ENCODE measurements at regions of chr11 and their contacts with region 1.

Region 1: DNA sequence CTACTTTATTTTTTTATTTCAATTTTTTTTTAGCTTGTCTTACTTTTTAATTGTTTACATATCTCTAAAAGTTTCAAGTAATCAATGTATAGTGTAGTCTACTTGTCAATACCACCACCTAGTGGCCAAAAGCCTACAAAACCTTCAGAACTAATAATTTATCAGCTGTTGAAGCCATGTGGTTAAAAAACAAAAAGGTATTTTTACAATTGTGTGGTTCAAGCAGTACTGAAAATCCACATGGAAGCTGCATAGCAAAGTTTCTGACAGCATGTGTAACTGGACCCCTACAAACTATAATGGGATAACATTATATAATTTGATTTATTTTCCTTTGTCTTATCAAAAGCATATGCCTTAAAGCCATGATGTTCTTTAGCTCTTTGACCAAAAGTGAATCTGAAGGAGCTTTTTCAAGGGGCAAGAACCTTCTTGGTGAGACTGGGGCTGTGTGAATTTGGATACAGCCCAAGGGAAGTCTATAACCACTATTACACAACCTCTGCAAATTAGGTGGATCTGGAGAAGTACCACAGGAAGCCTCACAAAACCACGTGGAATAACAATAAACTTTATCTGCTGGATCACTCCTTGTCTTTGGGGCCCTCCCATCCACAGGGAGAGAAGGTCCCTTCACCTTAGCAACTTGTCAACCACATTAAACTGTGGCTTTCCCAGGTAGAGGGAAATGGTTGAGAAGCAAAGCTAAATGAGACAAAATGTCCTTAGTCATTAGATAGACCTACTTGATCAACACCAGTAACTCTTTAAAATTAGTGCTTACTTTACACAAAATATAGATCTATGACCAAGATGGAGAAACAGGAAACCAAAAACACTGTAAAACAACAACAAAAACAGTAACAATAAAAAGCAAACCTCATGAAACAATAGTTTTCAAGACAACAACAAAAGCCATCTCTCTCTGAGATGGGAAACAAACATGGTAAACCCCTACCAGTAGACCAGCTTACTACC is 9.9 kb downstream of the NARS2 start:
- DNase-seq: no peak
- H3K4me3 ChIP-seq: no peak overlapping the region
- CTCF ChIP-seq: peak; percentile 34

Region 2: GRCh38 chr11:78045851-78046485 is 518.8 kb before region 1 on chr11:
- CTCF ChIA-PET with region 1: interaction called, 20 read pairs
- POLR2A ChIA-PET with region 1: no interaction called
- DNase-seq: no peak
- H3K4me3 ChIP-seq: peak overlapping the region; percentile 59
- CTCF ChIP-seq: peak; percentile 92

Region 3: GRCh38 chr11:78149646-78150045 is 415.1 kb before region 1 on chr11:
- CTCF ChIA-PET with region 1: interaction called, 36 read pairs
- POLR2A ChIA-PET with region 1: no interaction called
- DNase-seq: peak; percentile 57
- H3K4me3 ChIP-seq: no peak overlapping the region
- CTCF ChIP-seq: peak; percentile 49

Region 4: DNA sequence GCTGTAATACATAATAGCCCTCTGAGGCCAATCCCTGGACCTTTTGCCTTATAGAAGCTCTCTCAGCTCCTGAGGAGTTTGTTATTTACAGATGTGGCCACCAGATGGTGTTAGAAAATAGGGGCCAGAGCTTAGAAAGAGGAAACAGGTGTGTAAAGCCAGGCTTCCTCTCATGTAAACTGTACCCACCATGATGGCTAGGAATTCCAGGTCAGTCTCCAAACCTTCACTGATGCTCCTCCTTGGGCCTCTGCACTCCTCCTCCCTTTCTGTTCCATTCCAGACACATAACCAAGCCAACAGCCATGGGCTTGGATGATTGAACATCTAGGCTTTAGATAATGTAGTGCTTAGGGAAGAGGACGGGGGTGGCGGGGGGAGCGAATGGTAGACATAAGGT is 336.3 kb before region 1 on chr11:
- CTCF ChIA-PET with region 1: interaction called, 96 read pairs
- POLR2A ChIA-PET with region 1: no interaction called
- DNase-seq: no peak
- H3K4me3 ChIP-seq: no peak overlapping the region
- CTCF ChIP-seq: peak; percentile 21

Region 5: GRCh38 chr11:78379039-78379670 is 185.6 kb before region 1 on chr11:
- CTCF ChIA-PET with region 1: interaction called, 11 read pairs
- POLR2A ChIA-PET with region 1: no interaction called
- DNase-seq: no peak
- H3K4me3 ChIP-seq: no peak overlapping the region
- CTCF ChIP-seq: no peak

Region 6: GRCh38 chr11:78432058-78432515 is 132.7 kb before region 1 on chr11:
- CTCF ChIA-PET with region 1: interaction called, 17 read pairs
- POLR2A ChIA-PET with region 1: no interaction called
- DNase-seq: no peak
- H3K4me3 ChIP-seq: no peak overlapping the region
- CTCF ChIP-seq: peak; percentile 27

Region 7: GRCh38 chr11:78548911-78549590 is 15.7 kb before region 1 on chr11:
- CTCF ChIA-PET with region 1: interaction called, 30 read pairs
- POLR2A ChIA-PET with region 1: no interaction called
- DNase-seq: no peak
- H3K4me3 ChIP-seq: no peak overlapping the region
- CTCF ChIP-seq: no peak

Region 8: DNA sequence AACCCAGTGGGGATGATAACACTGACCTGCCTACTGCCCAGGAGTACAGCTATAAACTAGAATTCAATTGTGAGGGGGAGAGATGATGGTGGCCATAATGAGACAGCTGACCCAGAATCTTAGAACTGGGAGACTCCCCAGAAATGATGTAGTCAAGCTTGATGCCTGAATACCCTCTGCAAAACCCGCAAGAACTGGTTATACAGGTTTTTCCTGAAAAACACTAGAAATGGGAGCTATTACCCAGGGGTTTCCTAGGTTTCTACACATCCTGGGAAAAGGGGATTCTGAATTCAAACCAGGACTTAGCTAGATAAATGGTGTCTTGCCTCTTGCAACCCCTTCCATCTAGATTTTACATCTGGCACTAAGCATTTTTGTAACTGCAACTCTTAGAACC is 123.7 kb after region 1 on chr11:
- CTCF ChIA-PET with region 1: no interaction called
- POLR2A ChIA-PET with region 1: no interaction called
- DNase-seq: no peak
- H3K4me3 ChIP-seq: no peak overlapping the region
- CTCF ChIP-seq: no peak

Region 9: DNA sequence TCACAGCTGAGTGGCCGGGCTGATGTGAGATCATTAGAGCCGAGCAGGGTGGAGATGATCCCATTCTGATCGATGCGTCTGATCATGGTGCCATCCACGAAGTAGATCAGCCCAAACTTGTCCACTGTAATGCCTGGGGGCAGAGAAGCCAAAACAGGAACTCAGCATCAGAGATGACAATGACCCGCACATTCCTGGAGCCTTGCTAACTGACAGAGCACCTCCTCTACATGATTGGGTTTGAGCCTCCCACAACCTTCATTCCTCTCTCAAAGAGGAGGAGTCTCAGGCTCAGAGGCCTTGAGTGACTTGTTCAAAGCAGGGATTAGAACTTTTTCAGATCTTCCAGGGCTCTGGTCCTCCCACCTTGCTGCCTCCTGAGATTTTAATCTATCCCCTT is 143.6 kb after region 1 on chr11:
- CTCF ChIA-PET with region 1: no interaction called
- POLR2A ChIA-PET with region 1: no interaction called
- DNase-seq: no peak
- H3K4me3 ChIP-seq: no peak overlapping the region
- CTCF ChIP-seq: no peak